ENCODE measurements at regions of chr16 and their contacts with region 1.

Region 1: GRCh38 chr16:84116720-84117493 is at the start of gene MBTPS1:
- DNase-seq: peak; percentile 97 to 99 (median 98)
- H3K4me3 ChIP-seq: peak within 1 kb of the TSS; percentile 81 to 94 (median 83)
- H3K4me3 Mint-ChIP-seq: peak within 1 kb of the TSS; percentile 86 to 92
- H3K27ac ChIP-seq: peak within 1 kb of the TSS; percentile 89 to 93
- H3K27ac Mint-ChIP-seq: peak within 1 kb of the TSS; percentile 87 to 96 (median 93)
- H3K4me1 ChIP-seq: peaks cover 39 to 41% of the 10 kb centered on the region in 2 donors
- H3K4me1 Mint-ChIP-seq: peaks cover 29% of the 10 kb centered on the region
- H3K27me3 ChIP-seq: no peaks in the 10 kb centered on the region
- H3K27me3 Mint-ChIP-seq: peaks cover 0 to 6% (median 0%) of the 10 kb centered on the region in 3 donors
- CTCF ChIP-seq: no peak
- polyA plus RNA-seq, gene MBTPS1: 26.4 to 73.8 (median 28.0) TPM

Region 2: DNA sequence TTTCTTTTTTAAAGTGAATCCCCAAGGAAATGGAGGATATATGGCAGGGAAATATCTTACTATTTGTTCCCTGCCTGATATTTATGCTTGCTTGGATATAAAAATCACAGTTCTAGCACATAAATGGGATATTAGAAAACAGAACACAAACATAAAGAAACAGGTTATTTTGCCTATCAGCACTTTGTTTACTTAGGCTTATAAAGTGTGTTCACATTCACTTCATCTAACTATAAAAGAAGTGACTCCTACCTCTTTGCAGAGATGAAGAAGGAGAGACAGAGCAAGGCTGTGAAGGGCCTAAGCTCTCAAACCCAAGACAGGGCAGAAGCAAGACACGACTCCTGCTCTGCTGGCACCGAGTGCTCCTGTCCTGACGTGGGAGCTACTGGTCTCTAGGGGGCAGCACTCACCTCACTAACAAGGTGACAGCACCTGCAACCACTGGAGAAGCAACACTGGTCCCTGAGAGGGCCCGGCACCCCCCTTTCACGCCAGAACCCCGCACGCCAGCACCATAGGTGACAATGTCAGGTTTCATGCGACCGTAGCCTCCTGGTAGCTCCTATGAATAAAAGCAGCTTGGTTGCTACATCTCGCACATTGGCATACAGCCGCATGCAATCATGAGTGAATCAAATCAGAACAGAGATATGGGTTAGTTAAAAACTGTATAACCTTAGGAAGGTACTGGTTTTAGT is 32.2 kb before region 1 on chr16:
- intact Hi-C with region 1: loop called in 1 of 2 experiments (anchors 5 kb)
- DNase-seq: peak in 2 of 3 donors; percentile 48 to 63
- H3K4me3 ChIP-seq: no peak overlapping the region
- H3K4me3 Mint-ChIP-seq: no peak overlapping the region
- H3K27ac ChIP-seq: peak overlapping the region; percentile 6 to 42
- H3K27ac Mint-ChIP-seq: peak overlapping the region in 3 of 7 donors; percentile 7 to 70 (median 57)
- H3K4me1 ChIP-seq: peaks cover 60 to 67% of the 10 kb centered on the region in 2 donors
- H3K4me1 Mint-ChIP-seq: peaks cover 68% of the 10 kb centered on the region
- H3K27me3 ChIP-seq: no peaks in the 10 kb centered on the region
- H3K27me3 Mint-ChIP-seq: peaks cover 0 to 3% (median 0%) of the 10 kb centered on the region in 3 donors
- CTCF ChIP-seq: peak; percentile 77

Region 3: GRCh38 chr16:84103678-84104077 is 13.2 kb before region 1 on chr16:
- intact Hi-C with region 1: loop called in 1 of 2 experiments (anchors 2 kb)
- DNase-seq: no peak
- H3K4me3 ChIP-seq: no peak overlapping the region
- H3K4me3 Mint-ChIP-seq: no peak overlapping the region
- H3K27ac ChIP-seq: no peak overlapping the region
- H3K27ac Mint-ChIP-seq: no peak overlapping the region
- H3K4me1 ChIP-seq: peaks cover 32% of the 10 kb centered on the region in 2 donors
- H3K4me1 Mint-ChIP-seq: peaks cover 40% of the 10 kb centered on the region
- H3K27me3 ChIP-seq: no peaks in the 10 kb centered on the region
- H3K27me3 Mint-ChIP-seq: peaks cover 0 to 4% (median 0%) of the 10 kb centered on the region in 3 donors
- CTCF ChIP-seq: no peak

Measured in CD14-positive monocyte (primary cell).